HCT116 (cell line): ENCODE measurements at regions of chr14 and their contacts with region 1.

Region 1: GRCh38 chr14:32076278-32077080 is 625 bp upstream of the ARHGAP5 start:
- DNase-seq: peak; percentile 90
- ATAC-seq: peak; percentile 88
- H3K4me3 ChIP-seq: peak overlapping the region; percentile 84 to 93
- H3K27ac ChIP-seq: peak overlapping the region; percentile 87
- H3K4me1 ChIP-seq: peaks cover 19 to 52% of the 10 kb centered on the region in 2 experiments
- H3K27me3 ChIP-seq: no peaks in the 10 kb centered on the region
- CTCF ChIP-seq: no peak
- POLR2A ChIP-seq: peak; percentile 68
- RAD21 ChIP-seq: no peak

Region 2: GRCh38 chr14:30957813-30958370 is 1118.6 kb before region 1 on chr14:
- CTCF ChIA-PET with region 1: no interaction called
- POLR2A ChIA-PET with region 1: no interaction called
- RAD21 ChIA-PET with region 1: no interaction called
- intact Hi-C with region 1: no loop called
- DNase-seq: no peak
- ATAC-seq: no peak
- H3K4me3 ChIP-seq: no peak overlapping the region
- H3K27ac ChIP-seq: no peak overlapping the region
- H3K4me1 ChIP-seq: peaks cover 10 to 40% of the 10 kb centered on the region in 2 experiments; a peak in 3 of 4 replicates
- H3K27me3 ChIP-seq: no peaks in the 10 kb centered on the region
- CTCF ChIP-seq: no peak
- POLR2A ChIP-seq: no peak
- RAD21 ChIP-seq: no peak

Region 3: GRCh38 chr14:31510222-31510621 is 566.3 kb before region 1 on chr14:
- CTCF ChIA-PET with region 1: interaction called, 4 read pairs
- POLR2A ChIA-PET with region 1: no interaction called
- RAD21 ChIA-PET with region 1: interaction called in 1 of 2 experiments, 3 read pairs
- intact Hi-C with region 1: loop called (anchors 10 kb)
- DNase-seq: peak; percentile 27
- ATAC-seq: peak; percentile 55
- H3K4me3 ChIP-seq: no peak overlapping the region
- H3K27ac ChIP-seq: no peak overlapping the region
- H3K4me1 ChIP-seq: no peaks in the 10 kb centered on the region
- H3K27me3 ChIP-seq: no peaks in the 10 kb centered on the region
- CTCF ChIP-seq: peak; percentile 27 to 80 (median 67); a peak in 5 of 6 replicates
- POLR2A ChIP-seq: no peak
- RAD21 ChIP-seq: peak; percentile 76

Region 4: GRCh38 chr14:31937721-31938346 is 138.6 kb before region 1 on chr14:
- CTCF ChIA-PET with region 1: interaction called, 5 read pairs
- POLR2A ChIA-PET with region 1: no interaction called
- RAD21 ChIA-PET with region 1: interaction called in 1 of 2 experiments, 3 read pairs
- intact Hi-C with region 1: loop called (anchors 5 kb)
- DNase-seq: peak; percentile 91
- ATAC-seq: peak; percentile 91
- H3K4me3 ChIP-seq: no peak overlapping the region
- H3K27ac ChIP-seq: no peak overlapping the region
- H3K4me1 ChIP-seq: peaks cover 30 to 50% of the 10 kb centered on the region in 2 experiments
- H3K27me3 ChIP-seq: no peaks in the 10 kb centered on the region
- CTCF ChIP-seq: no peak
- POLR2A ChIP-seq: no peak
- RAD21 ChIP-seq: peak; percentile 13; the same call in 1 of the 2 replicates

Region 5: DNA sequence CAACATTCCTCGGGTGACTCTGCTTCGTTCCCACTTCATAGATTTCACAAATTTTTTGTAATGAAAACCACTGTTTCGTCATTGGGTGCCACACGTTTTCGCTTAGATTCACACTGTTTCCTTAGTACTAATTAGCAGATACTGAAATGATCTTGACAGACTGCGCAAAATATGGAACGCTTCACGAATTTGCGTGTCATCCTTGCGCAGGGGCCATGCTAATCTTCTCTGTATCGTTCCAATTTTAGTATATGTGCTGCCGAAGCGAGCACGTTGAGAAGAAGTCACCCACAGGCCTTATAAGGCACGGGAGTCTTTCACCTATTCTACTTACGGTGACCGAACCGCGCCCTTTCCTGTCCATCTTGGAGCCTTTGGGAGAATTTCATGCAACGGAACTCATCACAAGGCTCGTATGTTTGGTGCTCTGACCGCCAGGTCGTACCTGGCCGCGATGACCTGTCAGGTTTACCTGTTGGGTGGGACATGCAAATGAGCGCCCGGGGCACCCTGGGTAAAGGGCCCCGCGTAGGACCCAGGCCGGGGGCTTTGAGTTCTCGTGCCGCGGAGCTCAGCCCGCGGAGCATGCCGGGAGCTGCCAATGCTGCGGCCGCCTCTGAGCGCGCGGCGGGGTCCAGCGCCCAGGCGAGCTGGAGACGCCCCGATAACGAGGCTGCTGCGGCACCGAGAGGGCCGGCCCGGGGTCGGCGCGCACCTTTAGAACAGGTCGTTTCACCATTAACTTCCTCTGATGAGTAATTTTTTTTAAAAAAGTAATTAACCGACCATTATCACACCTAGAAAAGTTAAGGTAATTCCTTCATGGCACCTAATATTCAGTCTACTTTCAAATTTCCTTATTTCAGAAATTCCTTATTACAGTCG is 126.8 kb after region 1 on chr14 and contains the start of gene RNU6-8:
- CTCF ChIA-PET with region 1: no interaction called
- POLR2A ChIA-PET with region 1: interaction called, 7 read pairs
- RAD21 ChIA-PET with region 1: no interaction called
- intact Hi-C with region 1: loop called (anchors 2 kb)
- DNase-seq: peak; percentile 80
- ATAC-seq: peak; percentile 87
- H3K4me3 ChIP-seq: peak within 1 kb of the TSS; percentile 36 to 53
- H3K27ac ChIP-seq: peak within 1 kb of the TSS; percentile 47
- H3K4me1 ChIP-seq: peaks cover 25 to 49% of the 10 kb centered on the region in 2 experiments
- H3K27me3 ChIP-seq: no peaks in the 10 kb centered on the region
- CTCF ChIP-seq: no peak
- POLR2A ChIP-seq: peak; percentile 77
- RAD21 ChIP-seq: no peak
- total RNA-seq, gene RNU6-8: not detected

Region 6: GRCh38 chr14:32382704-32383103 is 306.2 kb after region 1 on chr14:
- CTCF ChIA-PET with region 1: no interaction called
- POLR2A ChIA-PET with region 1: no interaction called
- RAD21 ChIA-PET with region 1: interaction called in 1 of 2 experiments, 3 read pairs
- intact Hi-C with region 1: loop called (anchors 2 kb)
- DNase-seq: no peak
- ATAC-seq: peak; percentile 93
- H3K4me3 ChIP-seq: no peak overlapping the region
- H3K27ac ChIP-seq: no peak overlapping the region
- H3K4me1 ChIP-seq: no peaks in the 10 kb centered on the region
- H3K27me3 ChIP-seq: no peaks in the 10 kb centered on the region
- CTCF ChIP-seq: peak; percentile 24 to 59 (median 47); a peak in 4 of 6 replicates
- POLR2A ChIP-seq: no peak
- RAD21 ChIP-seq: peak; percentile 73

Region 7: GRCh38 chr14:32469388-32470160 is 393.1 kb after region 1 on chr14:
- CTCF ChIA-PET with region 1: no interaction called
- POLR2A ChIA-PET with region 1: no interaction called
- RAD21 ChIA-PET with region 1: no interaction called
- intact Hi-C with region 1: loop called (anchors 10 kb)
- DNase-seq: peak; percentile 26
- ATAC-seq: no peak; the same call in 1 of the 2 replicates
- H3K4me3 ChIP-seq: no peak overlapping the region
- H3K27ac ChIP-seq: no peak overlapping the region
- H3K4me1 ChIP-seq: no peaks in the 10 kb centered on the region
- H3K27me3 ChIP-seq: no peaks in the 10 kb centered on the region
- CTCF ChIP-seq: peak; percentile 20 to 64 (median 42); a peak in 5 of 6 replicates
- POLR2A ChIP-seq: no peak
- RAD21 ChIP-seq: peak; percentile 64